ENCODE measurements at regions of chr16 and their contacts with region 1.

Region 1: DNA sequence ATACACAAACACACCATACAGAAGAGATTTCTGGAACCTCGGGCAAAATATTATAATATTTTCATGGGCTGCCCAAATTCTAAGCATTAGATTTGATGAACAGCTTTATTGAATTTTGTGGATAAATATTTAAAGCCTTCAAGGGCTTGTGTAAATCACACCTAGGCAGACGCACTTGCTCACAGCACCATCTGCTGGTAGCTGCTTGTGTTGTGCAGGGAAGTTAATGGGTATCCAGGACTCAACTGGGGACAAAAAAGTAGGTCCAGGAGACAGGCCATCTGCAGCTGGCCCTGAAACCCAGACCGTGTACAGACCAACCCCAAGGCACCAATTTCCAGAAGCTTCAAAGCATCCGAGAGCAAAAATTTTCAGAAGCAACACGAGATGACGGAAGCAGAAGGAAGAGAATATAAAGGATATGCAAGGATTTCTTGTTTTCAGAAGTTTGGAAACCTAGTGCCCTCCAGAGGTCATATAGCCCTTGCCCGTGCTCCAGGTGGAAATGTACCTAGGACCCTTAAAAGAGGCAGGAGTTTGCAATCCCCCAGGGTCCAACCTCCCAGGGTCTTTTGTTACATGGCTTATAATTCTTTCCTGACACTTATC is 140.0 kb downstream of the CHD9NB start:
- DNase-seq: peak; percentile 33 to 82
- H3K4me3 ChIP-seq: no peak overlapping the region
- H3K27ac ChIP-seq: no peak overlapping the region
- H3K4me1 ChIP-seq: no peaks in the 10 kb centered on the region; a peak in 1 of 7 replicates
- H3K27me3 ChIP-seq: no peaks in the 10 kb centered on the region
- CTCF ChIP-seq: peak; percentile 72 to 89 (median 88)
- EP300 ChIP-seq: no peak
- POLR2A ChIP-seq: no peak
- RAD21 ChIP-seq: peak; percentile 89 to 91

Region 2: DNA sequence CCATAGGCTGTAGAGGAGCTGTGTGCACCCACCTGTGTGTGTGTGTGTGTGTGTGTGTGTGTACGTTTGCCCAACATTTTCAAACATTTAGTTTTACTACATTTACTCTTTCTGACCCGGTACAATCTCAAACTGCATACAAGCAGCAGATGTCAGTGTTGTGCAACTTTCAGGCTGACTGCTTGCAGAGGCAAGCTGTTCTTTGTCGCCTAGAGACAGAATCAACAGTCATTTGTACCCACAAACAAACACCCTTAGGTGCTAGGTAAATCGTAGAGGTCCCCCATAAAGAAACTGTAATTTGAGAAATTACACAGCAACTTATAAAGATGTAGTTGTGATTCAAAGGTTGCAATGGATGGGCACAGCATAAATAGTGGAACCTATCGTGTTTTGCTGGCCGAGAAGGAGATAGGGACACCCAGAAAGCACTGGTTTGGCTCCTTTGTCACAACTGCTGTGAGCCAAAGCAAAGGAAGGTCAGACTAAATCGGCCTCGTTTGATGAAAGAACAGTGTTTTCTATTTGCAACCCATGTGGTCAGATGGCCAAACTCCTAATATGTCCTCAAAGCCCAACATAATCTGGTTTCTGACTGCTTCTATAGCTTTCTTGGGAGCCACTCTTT is 844.1 kb before region 1 on chr16:
- CTCF ChIA-PET with region 1: interaction called, 78 read pairs
- POLR2A ChIA-PET with region 1: no interaction called
- DNase-seq: peak; percentile 3 to 53
- H3K4me3 ChIP-seq: no peak overlapping the region
- H3K27ac ChIP-seq: no peak overlapping the region
- H3K4me1 ChIP-seq: no peaks in the 10 kb centered on the region
- H3K27me3 ChIP-seq: no peaks in the 10 kb centered on the region
- CTCF ChIP-seq: peak; percentile 15 to 66 (median 66)
- EP300 ChIP-seq: 0 out of 3 replicates have a peak, but pooled peaks of 1 of the 2 experiments have one; percentile 26
- POLR2A ChIP-seq: no peak
- RAD21 ChIP-seq: peak; percentile 94

Region 3: DNA sequence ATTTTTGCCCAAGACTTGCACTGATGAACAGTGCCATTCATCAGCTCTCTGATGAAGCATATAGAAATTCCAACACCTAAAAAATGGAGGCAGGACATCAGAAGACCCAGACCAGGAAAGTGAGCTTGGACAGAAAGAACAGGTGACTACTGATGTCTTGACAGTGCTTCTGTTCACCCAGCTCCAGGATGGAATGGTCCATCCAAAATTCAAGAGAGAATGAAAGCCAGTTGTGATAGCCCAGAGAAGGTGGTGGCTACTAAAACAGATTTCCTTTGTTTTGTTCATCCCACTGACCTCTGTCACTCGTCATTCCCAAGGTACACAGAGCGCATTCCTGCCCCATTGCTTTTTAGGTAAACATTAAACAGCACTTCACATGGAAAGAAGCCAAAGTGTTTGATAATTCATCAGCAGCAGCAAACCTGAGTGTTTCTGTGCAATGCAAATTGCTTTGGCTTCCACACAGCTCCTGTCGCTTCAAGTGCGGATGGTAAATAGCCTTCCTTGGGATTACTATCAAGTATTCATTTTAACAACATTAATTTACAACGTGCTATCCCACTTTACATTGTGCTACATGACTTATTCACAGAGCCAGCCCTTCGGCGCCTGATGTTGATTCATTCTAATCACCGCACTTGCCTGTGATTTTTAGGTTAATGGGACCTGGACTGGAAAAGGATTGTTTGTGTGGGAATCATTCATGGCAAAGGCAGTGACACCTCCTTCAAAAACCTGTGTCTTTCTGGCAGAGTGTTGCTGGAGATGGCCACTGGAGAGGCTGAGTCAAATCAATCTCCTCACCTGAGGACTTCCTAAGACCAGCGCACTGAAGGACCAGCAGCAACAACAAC is 300.6 kb before region 1 on chr16:
- CTCF ChIA-PET with region 1: interaction called, 17 read pairs
- POLR2A ChIA-PET with region 1: no interaction called
- DNase-seq: no peak
- H3K4me3 ChIP-seq: no peak overlapping the region
- H3K27ac ChIP-seq: no peak overlapping the region
- H3K4me1 ChIP-seq: no peaks in the 10 kb centered on the region
- H3K27me3 ChIP-seq: no peaks in the 10 kb centered on the region
- CTCF ChIP-seq: no peak
- EP300 ChIP-seq: no peak
- POLR2A ChIP-seq: no peak
- RAD21 ChIP-seq: no peak

Region 4: DNA sequence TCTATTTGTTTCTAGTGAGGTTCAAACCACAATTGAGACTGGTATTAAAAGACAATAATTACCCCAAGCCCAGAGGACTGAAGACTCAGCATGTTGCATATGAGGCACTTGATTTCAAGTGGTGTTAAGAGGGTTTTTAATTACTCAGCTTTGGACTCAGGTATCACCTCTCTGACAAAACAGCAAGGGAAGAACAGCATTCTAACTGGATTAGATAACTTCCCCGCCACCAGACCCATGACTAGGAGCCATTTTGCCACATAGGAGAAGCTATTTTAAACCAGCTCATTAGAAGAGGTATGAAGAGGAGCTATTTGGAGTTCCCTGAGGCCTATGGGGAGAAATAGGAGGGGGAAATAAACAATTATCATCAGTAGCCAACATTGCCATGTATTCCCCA is 139.6 kb before region 1 on chr16:
- CTCF ChIA-PET with region 1: no interaction called
- POLR2A ChIA-PET with region 1: no interaction called
- DNase-seq: no peak
- H3K4me3 ChIP-seq: no peak overlapping the region
- H3K27ac ChIP-seq: no peak overlapping the region
- H3K4me1 ChIP-seq: no peaks in the 10 kb centered on the region
- H3K27me3 ChIP-seq: no peaks in the 10 kb centered on the region
- CTCF ChIP-seq: no peak
- EP300 ChIP-seq: no peak
- POLR2A ChIP-seq: no peak
- RAD21 ChIP-seq: no peak

Region 5: GRCh38 chr16:52861614-52862022 is 51.1 kb before region 1 on chr16:
- CTCF ChIA-PET with region 1: interaction called, 30 read pairs
- POLR2A ChIA-PET with region 1: no interaction called
- DNase-seq: peak; percentile 3 to 51
- H3K4me3 ChIP-seq: no peak overlapping the region
- H3K27ac ChIP-seq: no peak overlapping the region
- H3K4me1 ChIP-seq: peaks cover 0 to 3% (median 0%) of the 10 kb centered on the region in 4 experiments; a peak in 1 of 7 replicates
- H3K27me3 ChIP-seq: no peaks in the 10 kb centered on the region
- CTCF ChIP-seq: peak in 2 of 3 experiments; percentile 53 to 61; a peak in 3 of 4 replicates
- EP300 ChIP-seq: no peak
- POLR2A ChIP-seq: no peak
- RAD21 ChIP-seq: peak; percentile 86 to 90

Region 6: DNA sequence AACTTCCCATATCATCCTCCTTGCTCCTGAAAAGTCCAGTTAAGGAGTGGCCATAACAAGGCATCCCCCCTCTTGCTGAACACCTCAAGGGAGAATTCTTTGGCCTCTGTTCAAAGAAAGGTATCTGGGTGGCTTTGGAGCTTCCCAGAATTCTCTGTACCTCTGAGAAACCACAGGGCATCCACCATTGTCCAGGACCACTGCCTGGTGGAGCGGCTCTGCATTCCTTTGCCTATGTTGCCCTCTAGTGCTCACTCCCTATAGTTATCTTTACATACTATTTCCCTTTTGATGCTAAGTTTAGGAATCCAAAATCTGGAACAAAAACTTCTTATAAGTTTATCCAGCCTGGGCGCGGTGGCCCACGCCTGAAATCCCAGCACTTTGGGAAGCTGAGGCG is 109.7 kb after region 1 on chr16:
- CTCF ChIA-PET with region 1: interaction called, 54 read pairs
- POLR2A ChIA-PET with region 1: interaction called, 3 read pairs
- DNase-seq: peak in 1 of 2 experiments; percentile 55
- H3K4me3 ChIP-seq: no peak overlapping the region
- H3K27ac ChIP-seq: no peak overlapping the region
- H3K4me1 ChIP-seq: no peaks in the 10 kb centered on the region
- H3K27me3 ChIP-seq: no peaks in the 10 kb centered on the region
- CTCF ChIP-seq: peak; percentile 52 to 73 (median 70)
- EP300 ChIP-seq: no peak
- POLR2A ChIP-seq: no peak
- RAD21 ChIP-seq: peak; percentile 97 to 98